Activated CD4-positive, alpha-beta T cell treated with anti-CD3 and anti-CD28 coated beads, Interleukin-2, amount 10 ng/mL, durations not matched to agents 24 days and 14 days (primary cell): ENCODE measurements at regions of chr17 and their contacts with region 1.

Region 1: DNA sequence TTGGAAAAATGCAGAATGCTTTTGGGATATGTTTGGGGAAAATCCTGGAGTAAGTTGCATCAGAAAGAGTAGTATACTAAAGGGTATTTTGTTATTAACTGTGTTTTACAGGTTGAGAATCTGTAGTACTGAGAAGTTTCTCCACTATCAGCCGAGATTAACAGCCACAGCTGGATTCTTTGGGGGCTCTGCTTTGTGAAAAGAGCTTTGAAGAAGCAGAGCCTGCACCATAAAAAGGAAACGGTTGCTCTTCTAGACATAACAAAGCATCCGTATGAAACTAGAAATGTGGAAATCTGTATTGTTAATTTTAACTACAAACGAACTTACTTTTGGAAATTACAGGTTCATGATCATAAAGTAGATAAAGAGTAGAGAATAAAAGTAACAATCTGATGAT is 5.3 kb downstream of the NLK start:
- DNase-seq: no peak
- H3K4me3 Mint-ChIP-seq: no peak overlapping the region
- H3K27ac Mint-ChIP-seq: no peak overlapping the region
- H3K4me1 Mint-ChIP-seq: peaks cover 52% of the 10 kb centered on the region
- H3K27me3 Mint-ChIP-seq: no peaks in the 10 kb centered on the region

Region 2: DNA sequence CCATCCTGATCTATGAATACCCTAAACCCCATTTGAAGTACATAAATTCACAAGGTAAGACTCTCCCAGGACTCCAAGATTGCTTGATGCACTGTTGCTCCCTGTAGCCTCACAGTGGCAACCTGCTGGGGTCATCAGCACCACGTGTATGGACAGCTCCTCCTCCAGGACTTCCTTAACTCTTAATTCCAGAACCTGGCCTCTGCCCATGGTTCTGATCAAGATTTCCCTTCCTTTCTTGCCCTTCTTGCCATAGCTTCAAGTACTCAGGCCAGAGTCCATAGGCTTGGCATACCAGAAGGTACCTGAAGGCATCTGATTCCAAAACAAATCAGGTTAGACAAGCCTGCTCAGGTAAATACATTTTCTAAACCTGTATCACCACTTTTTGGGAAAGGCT is 39.3 kb before region 1 on chr17:
- intact Hi-C with region 1: no loop called
- DNase-seq: no peak
- H3K4me3 Mint-ChIP-seq: no peak overlapping the region
- H3K27ac Mint-ChIP-seq: no peak overlapping the region
- H3K4me1 Mint-ChIP-seq: peaks cover 2% of the 10 kb centered on the region
- H3K27me3 Mint-ChIP-seq: peaks cover 18% of the 10 kb centered on the region

Region 3: DNA sequence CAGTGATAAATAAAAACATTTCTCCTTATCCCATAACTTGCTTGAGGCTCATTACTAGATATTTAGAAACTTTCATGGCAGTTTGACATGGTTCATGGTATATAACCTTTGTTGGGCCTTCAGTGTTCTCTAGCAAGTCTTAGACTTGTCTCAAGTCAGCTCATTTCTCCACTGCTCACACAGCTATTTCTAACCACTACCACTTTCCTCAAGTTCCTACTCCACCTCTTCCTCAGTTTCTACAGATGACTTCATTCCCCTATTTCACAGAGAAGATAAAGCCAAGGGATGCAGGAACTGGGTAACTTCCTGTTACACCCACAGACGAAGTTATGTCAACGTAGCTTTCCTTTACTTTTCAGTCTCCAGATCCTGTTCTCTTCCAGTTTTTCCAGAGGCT is 17.9 kb after region 1 on chr17:
- intact Hi-C with region 1: no loop called
- DNase-seq: no peak
- H3K4me3 Mint-ChIP-seq: no peak overlapping the region
- H3K27ac Mint-ChIP-seq: no peak overlapping the region
- H3K4me1 Mint-ChIP-seq: peaks cover 14% of the 10 kb centered on the region
- H3K27me3 Mint-ChIP-seq: no peaks in the 10 kb centered on the region

Region 4: GRCh38 chr17:28078341-28079229 is 30.8 kb after region 1 on chr17:
- intact Hi-C with region 1: loop called (anchors 2 kb)
- DNase-seq: no peak
- H3K4me3 Mint-ChIP-seq: no peak overlapping the region
- H3K27ac Mint-ChIP-seq: no peak overlapping the region
- H3K4me1 Mint-ChIP-seq: peaks cover 29% of the 10 kb centered on the region
- H3K27me3 Mint-ChIP-seq: no peaks in the 10 kb centered on the region

Region 5: GRCh38 chr17:28133562-28133970 is 85.8 kb after region 1 on chr17:
- intact Hi-C with region 1: loop called (anchors 5 kb)
- DNase-seq: no peak
- H3K4me3 Mint-ChIP-seq: no peak overlapping the region
- H3K27ac Mint-ChIP-seq: no peak overlapping the region
- H3K4me1 Mint-ChIP-seq: peaks cover 2% of the 10 kb centered on the region
- H3K27me3 Mint-ChIP-seq: no peaks in the 10 kb centered on the region

Region 6: GRCh38 chr17:28174352-28174964 is 126.7 kb after region 1 on chr17:
- intact Hi-C with region 1: loop called (anchors 5 kb)
- DNase-seq: peak; percentile 79
- H3K4me3 Mint-ChIP-seq: peak overlapping the region; percentile 36
- H3K27ac Mint-ChIP-seq: no peak overlapping the region
- H3K4me1 Mint-ChIP-seq: peaks cover 24% of the 10 kb centered on the region
- H3K27me3 Mint-ChIP-seq: no peaks in the 10 kb centered on the region

Region 7: DNA sequence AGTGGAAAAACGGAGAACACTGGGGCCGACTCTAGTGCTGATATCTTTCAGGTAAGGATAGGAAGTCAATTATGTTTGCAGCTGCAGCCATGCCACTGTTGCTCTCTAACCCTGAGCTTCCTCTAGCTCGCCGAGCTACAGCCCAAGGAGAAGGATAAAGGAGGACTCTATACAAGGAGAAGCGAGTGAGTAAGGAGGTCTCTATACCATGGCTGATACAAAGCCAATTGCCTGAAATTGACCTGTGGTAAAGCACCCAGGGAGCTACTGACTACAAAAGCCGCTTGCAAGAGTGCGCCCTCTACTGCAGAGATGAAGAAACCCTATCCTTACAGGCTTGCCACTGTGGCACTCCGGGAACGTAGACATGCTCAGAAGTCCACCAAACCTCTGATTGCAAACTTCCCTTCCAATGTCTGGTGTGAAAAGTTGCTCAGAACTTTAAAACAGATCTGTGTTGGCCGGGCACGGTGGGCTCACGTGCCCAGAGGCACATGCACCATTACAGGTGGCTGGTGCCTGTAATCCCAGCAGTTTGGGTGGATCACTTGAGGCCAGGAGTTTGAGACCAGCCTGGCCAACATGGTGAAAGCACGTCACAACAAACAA is 369.0 kb after region 1 on chr17:
- intact Hi-C with region 1: no loop called
- DNase-seq: peak; percentile 88
- H3K4me3 Mint-ChIP-seq: no peak overlapping the region
- H3K27ac Mint-ChIP-seq: no peak overlapping the region
- H3K4me1 Mint-ChIP-seq: peaks cover 2% of the 10 kb centered on the region
- H3K27me3 Mint-ChIP-seq: peaks cover 16% of the 10 kb centered on the region